Dorsolateral prefrontal cortex (tissue), 120 donors: ENCODE measurements at regions of chr10 and their contacts with region 1.

Region 1: DNA sequence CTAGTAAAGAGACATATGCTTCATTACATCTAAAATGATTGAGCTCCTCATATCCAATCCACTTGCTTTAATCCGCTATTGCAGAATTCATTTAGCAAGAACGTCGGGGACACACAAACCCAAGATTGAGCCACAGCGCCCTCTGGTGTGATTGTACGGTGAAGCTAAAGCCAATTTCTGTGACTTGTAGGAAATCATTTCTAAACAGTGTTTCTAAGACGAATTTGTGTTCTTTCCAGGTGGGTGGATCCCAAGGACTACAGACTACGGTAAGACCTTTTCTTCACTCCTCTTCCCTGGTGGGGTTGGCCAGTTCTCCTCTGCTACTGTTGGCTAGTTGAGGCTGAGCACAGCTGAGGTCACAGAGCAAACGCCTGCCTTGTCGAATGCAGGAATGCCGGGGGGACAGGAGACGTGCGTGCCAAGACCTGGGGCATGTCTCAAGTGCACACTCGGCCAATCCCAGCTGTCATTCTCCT is 5.2 kb downstream of the DMBT1 start:
- DNase-seq: peak; percentile 30 to 91 (median 79)
- H3K4me3 ChIP-seq: peak overlapping the region in 57 of 59 donors; percentile 5 to 69 (median 45)
- H3K27ac ChIP-seq: peak overlapping the region in 15 of 59 donors; percentile 0 to 75 (median 31)
- H3K27me3 ChIP-seq: peaks cover 0 to 8% (median 0%) of the 10 kb centered on the region in 45 donors
- CTCF ChIP-seq: peak; percentile 65 to 96 (median 89)

Region 2: GRCh38 chr10:122298598-122299301 is 267.0 kb before region 1 on chr10:
- intact Hi-C with region 1: loop called (anchors 2 to 5 kb)
- DNase-seq: peak in 9 of 10 donors; percentile 38 to 81 (median 76)
- H3K4me3 ChIP-seq: peak overlapping the region in 55 of 59 donors; percentile 6 to 66 (median 38)
- H3K27ac ChIP-seq: peak overlapping the region in 56 of 59 donors; percentile 38 to 100 (median 94)
- H3K27me3 ChIP-seq: no peaks in the 10 kb centered on the region
- CTCF ChIP-seq: peak; percentile 65 to 99 (median 96)

Region 3: GRCh38 chr10:122435212-122435827 is 130.4 kb before region 1 on chr10:
- intact Hi-C with region 1: loop called (anchors 5 kb)
- DNase-seq: no peak
- H3K4me3 ChIP-seq: no peak overlapping the region
- H3K27ac ChIP-seq: peak overlapping the region in 31 of 59 donors; percentile 2 to 71 (median 30)
- H3K27me3 ChIP-seq: no peaks in the 10 kb centered on the region
- CTCF ChIP-seq: peak; percentile 71 to 96 (median 85)

Region 4: DNA sequence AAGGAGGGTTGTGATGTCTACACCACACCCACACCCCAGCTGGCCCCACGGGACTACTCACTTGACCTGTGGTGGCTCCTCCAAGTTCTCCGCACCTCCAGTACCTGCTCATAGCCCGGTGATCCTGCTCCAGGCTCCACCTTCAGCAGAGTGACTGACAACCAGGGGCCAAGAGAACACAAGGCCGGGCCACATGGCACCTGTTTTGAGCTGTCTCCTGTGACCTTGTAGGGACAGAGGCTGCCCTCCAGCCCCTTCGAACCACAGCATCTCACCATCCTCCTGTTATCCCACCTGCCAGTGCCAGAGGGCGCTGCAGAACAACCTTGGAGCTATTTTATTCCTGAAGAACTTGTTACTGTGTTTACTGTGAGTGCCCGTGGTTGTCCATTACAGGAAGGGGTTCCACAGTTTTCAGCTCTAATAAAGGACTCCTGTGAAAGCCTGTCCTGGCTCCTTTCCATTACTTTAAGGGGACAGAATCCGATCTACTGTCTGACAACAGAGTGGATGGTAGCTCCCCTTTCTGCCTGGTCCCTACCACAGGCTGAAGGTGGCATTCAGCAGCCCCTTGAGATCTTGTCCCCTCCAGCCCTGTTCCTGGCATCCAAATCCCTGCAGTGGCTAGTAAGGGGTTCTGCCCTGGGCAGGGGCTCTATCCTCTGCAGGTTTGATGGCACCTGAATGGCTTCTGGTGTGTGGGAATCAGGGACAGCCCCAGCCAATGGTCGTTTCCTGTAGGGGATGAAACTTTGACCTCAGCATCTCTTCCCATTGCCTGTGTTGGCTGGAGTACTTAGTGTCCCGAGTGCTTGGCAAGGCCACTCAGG is 83.0 kb after region 1 on chr10:
- intact Hi-C with region 1: loop called in 1 of 2 experiments (anchors 5 kb)
- DNase-seq: peak; percentile 13 to 79 (median 66)
- H3K4me3 ChIP-seq: no peak overlapping the region
- H3K27ac ChIP-seq: no peak overlapping the region
- H3K27me3 ChIP-seq: peaks cover 0 to 15% (median 0%) of the 10 kb centered on the region in 45 donors
- CTCF ChIP-seq: peak; percentile 45 to 94 (median 86)